Ascending aorta (tissue), 2 donors: ENCODE measurements at regions of chr3 and their contacts with region 1.

Region 1: DNA sequence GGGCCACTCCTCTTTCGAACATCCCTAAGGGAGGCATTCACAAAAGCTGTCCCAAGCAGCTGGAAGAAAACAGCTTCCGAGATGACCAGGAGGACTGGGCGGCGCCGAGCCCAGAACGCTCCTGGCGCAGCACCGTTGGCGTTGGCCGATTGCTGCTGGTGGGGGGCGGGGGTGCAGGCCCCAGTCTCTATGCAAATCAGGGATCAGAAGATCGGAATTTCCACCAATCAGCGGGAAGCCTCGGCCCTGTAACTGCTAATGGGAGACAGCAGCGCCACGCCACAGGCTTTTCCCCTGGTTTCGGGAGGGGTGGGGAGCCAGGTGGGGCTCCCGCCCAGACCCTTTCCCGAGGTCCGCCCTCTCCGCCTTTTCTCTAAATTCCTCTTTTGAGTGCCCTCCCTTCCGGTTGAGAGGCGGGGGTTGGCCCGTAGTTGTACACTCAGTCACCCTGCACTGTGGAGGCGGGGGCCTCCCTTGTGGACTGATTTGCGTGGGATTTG is 27.0 kb downstream of the HMCES start:
- DNase-seq: peak; percentile 90 to 96
- H3K4me3 ChIP-seq: peak overlapping the region; percentile 33 to 52
- H3K27ac ChIP-seq: peak overlapping the region; percentile 80 to 90
- H3K4me1 ChIP-seq: peaks cover 0 to 12% of the 10 kb centered on the region in 2 donors
- H3K27me3 ChIP-seq: no peaks in the 10 kb centered on the region
- CTCF ChIP-seq: no peak

Region 2: DNA sequence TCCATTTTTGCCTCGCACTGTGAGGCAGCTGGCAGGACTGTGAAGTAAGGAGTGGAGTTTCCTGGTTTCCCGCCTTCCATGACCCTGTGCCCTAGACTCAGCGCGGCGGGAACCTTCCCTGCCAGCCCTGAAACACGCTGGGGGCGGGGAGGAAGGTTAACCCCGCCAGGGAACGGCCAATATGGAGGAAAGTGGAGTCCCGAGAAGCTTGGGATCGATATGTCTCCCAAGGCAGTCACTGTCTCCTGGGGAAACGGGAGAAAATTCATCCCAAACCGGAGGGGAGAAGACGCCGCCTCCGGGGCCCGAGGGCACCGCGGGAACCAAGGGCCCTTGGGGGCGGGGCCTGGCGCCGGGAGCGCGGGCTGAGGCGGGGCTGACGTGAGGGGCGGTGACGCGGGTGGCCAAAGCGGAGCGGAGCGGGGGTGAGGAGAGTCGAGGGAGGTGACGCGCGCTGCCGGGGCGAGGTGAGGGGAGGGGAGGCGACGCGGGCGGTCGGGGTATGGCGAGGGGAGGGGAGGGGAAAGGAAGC is 27.1 kb before region 1 on chr3 and contains the start of gene HMCES:
- intact Hi-C with region 1: loop called (anchors 1 kb)
- DNase-seq: peak; percentile 61 to 94
- H3K4me3 ChIP-seq: peak within 1 kb of the TSS; percentile 60 to 93
- H3K27ac ChIP-seq: peak within 1 kb of the TSS; percentile 95 to 98
- H3K4me1 ChIP-seq: peaks cover 0 to 14% of the 10 kb centered on the region in 2 donors
- H3K27me3 ChIP-seq: no peaks in the 10 kb centered on the region
- CTCF ChIP-seq: peak in 1 of 3 experiments; percentile 22
- total RNA-seq, gene HMCES: 11.2 TPM